ENCODE measurements at regions of chr19 and their contacts with region 1.

Region 1: GRCh38 chr19:6632002-6632621 is 37.8 kb downstream of the TNFSF14 start:
- DNase-seq: peak; percentile 89
- H3K4me3 Mint-ChIP-seq: no peak overlapping the region
- H3K27ac Mint-ChIP-seq: no peak overlapping the region
- H3K4me1 Mint-ChIP-seq: peaks cover 6% of the 10 kb centered on the region
- H3K27me3 Mint-ChIP-seq: no peaks in the 10 kb centered on the region
- CTCF ChIP-seq: peak; percentile 85

Region 2: DNA sequence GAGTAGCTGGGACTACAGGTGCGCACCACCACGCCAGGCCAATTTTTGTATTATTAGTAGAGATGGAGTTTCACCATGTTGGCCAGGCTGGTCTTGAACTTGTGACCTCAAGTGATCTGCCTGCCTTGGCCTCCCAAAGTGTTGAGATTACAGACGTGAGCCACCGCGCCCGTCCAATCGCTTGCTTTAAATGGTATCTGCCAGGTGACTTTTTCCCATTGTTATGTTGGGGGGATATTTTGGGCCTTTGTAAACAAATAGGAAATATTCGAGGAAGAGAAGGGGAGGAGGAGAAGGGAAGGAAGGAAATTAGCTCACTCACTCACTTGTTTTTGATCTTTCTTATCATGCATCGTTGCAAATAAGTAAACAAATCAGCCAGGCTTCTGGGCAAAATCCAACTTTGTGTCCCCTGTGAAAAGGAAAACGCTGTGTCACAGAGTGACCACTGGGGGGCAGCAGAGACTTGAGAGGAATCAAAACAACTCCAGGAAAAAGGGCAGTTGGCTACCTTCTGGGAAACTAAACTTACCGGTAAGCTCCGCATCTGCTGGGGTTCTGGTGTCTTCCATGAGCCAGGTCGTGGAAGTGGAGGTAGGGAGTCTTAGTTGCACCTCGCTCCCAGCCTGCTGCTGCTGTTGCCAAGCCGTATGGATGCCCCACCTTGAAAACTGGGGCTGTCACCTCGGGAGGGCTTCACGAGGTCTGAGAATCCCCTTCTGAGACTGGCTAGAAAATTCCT is 644.9 kb before region 1 on chr19:
- CTCF ChIA-PET with region 1: interaction called, 4 read pairs
- POLR2A ChIA-PET with region 1: no interaction called
- intact Hi-C with region 1: loop called (anchors 5 kb)
- DNase-seq: peak; percentile 84
- H3K4me3 Mint-ChIP-seq: peak overlapping the region; percentile 47
- H3K27ac Mint-ChIP-seq: no peak overlapping the region
- H3K4me1 Mint-ChIP-seq: peaks cover 14% of the 10 kb centered on the region
- H3K27me3 Mint-ChIP-seq: no peaks in the 10 kb centered on the region
- CTCF ChIP-seq: peak; percentile 89

Region 3: DNA sequence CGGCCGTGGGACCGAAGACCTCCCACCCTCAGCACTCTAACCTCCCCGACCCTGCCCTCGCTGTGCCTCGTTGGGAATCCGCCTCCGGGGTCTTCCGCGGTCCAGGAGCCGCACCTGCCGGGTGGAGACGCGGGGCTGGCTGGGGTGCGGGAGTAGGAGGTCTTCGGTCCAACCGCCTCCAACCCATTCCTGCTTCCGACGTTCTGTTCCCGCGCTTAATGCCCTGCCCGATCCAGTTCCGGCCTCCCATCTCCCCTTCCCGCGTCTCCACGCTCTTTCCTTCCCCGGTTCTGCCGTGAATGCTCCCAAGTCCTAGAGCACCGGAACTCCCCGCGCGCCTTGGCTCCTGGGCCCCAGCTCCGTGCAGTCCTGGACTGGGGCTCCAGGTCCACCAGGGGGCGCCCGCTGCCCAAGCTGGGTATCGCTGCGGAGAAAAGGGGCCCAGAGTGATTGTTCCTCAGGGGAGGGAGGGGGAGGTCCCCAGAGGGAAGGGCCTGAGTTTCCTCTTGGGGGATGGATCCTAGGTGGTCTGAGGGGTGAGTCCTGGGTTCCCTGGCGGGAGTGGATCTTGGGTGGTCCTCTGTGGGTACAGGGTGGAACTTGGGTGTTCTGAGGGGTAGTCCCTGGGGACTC is 115.3 kb before region 1 on chr19:
- CTCF ChIA-PET with region 1: interaction called, 80 read pairs
- POLR2A ChIA-PET with region 1: interaction called, 15 read pairs
- intact Hi-C with region 1: loop called (anchors 1 kb)
- DNase-seq: peak; percentile 93
- H3K4me3 Mint-ChIP-seq: peak overlapping the region; percentile 83
- H3K27ac Mint-ChIP-seq: peak overlapping the region; percentile 67
- H3K4me1 Mint-ChIP-seq: peaks cover 18% of the 10 kb centered on the region
- H3K27me3 Mint-ChIP-seq: no peaks in the 10 kb centered on the region
- CTCF ChIP-seq: peak; percentile 94

Region 4: GRCh38 chr19:6564393-6564792 is 67.7 kb before region 1 on chr19:
- CTCF ChIA-PET with region 1: interaction called, 25 read pairs
- POLR2A ChIA-PET with region 1: no interaction called
- intact Hi-C with region 1: loop called (anchors 1 kb)
- DNase-seq: peak; percentile 66
- H3K4me3 Mint-ChIP-seq: no peak overlapping the region
- H3K27ac Mint-ChIP-seq: no peak overlapping the region
- H3K4me1 Mint-ChIP-seq: no peaks in the 10 kb centered on the region
- H3K27me3 Mint-ChIP-seq: no peaks in the 10 kb centered on the region
- CTCF ChIP-seq: no peak

Region 5: GRCh38 chr19:6590827-6591319 is 41.2 kb before region 1 on chr19 and contains the start of gene CD70:
- CTCF ChIA-PET with region 1: interaction called, 3 read pairs
- POLR2A ChIA-PET with region 1: no interaction called
- intact Hi-C with region 1: loop called (anchors 2 kb)
- DNase-seq: peak; percentile 63
- H3K4me3 Mint-ChIP-seq: peak within 1 kb of the TSS; percentile 77
- H3K27ac Mint-ChIP-seq: peak within 1 kb of the TSS; percentile 18
- H3K4me1 Mint-ChIP-seq: peaks cover 39% of the 10 kb centered on the region
- H3K27me3 Mint-ChIP-seq: no peaks in the 10 kb centered on the region
- CTCF ChIP-seq: no peak
- total RNA-seq, gene CD70: 13.4 and 14.7 TPM in 2 replicates

Region 6: DNA sequence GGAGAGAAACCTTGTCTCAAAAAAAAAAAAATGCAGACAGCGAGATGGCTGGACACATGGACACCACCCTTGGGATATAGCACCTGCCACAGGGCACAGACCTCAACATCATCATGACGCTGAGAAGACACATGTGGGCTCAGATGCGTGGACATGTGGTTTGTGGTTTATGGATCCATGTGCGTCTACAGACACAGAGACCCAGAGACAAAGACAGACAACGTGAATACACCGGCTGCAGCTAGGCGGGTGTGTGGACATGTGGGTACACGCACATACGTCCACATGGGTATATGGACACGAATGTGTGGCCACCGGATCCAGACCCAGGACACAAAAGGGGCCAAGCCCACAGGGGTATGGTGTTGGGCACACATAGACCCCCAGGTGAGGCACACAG is 36.6 kb after region 1 on chr19:
- CTCF ChIA-PET with region 1: no interaction called
- POLR2A ChIA-PET with region 1: no interaction called
- intact Hi-C with region 1: no loop called
- DNase-seq: no peak
- H3K4me3 Mint-ChIP-seq: no peak overlapping the region
- H3K27ac Mint-ChIP-seq: no peak overlapping the region
- H3K4me1 Mint-ChIP-seq: peaks cover 6% of the 10 kb centered on the region
- H3K27me3 Mint-ChIP-seq: no peaks in the 10 kb centered on the region
- CTCF ChIP-seq: no peak

Region 7: GRCh38 chr19:6737284-6738046 is 105.4 kb after region 1 on chr19 and contains the start of gene GPR108:
- CTCF ChIA-PET with region 1: no interaction called
- POLR2A ChIA-PET with region 1: interaction called, 5 read pairs
- intact Hi-C with region 1: loop called (anchors 1 kb)
- DNase-seq: peak; percentile 100
- H3K4me3 Mint-ChIP-seq: peak within 1 kb of the TSS; percentile 88
- H3K27ac Mint-ChIP-seq: peak within 1 kb of the TSS; percentile 83
- H3K4me1 Mint-ChIP-seq: peaks cover 27% of the 10 kb centered on the region
- H3K27me3 Mint-ChIP-seq: no peaks in the 10 kb centered on the region
- CTCF ChIP-seq: no peak
- total RNA-seq, gene GPR108: 115 and 124 TPM in 2 replicates

Region 8: DNA sequence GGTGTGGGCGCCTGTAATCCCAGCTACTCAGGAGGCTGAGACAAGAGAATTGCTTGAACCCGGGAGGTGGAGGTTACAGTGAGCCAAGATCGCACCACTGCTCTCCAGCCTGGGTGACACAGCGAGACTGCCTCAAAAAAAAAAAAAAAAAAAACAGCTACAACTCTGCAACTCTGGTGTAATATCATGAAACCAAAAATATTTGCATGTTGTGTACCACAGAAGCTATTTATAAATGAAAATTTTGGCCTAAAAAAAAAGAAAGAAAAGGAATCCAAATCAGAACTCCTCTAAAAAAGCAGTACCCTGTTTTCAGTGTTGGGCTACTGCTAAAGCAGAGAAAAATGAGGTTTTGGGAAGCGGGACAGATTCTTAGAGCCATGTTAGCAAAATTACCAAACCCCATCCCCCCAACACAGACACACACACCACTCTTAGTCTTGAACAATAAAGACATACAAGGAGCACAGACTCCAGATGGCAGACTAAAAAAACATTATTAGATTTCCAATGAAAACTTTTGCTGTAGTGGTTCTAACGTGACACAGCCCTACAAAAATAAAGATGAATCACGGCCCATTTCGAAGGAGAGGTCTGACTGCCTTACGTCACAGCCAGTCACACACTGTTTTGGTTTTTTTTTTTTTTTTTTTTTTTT is 610.6 kb after region 1 on chr19:
- CTCF ChIA-PET with region 1: no interaction called
- POLR2A ChIA-PET with region 1: no interaction called
- intact Hi-C with region 1: no loop called
- DNase-seq: peak; percentile 76
- H3K4me3 Mint-ChIP-seq: no peak overlapping the region
- H3K27ac Mint-ChIP-seq: no peak overlapping the region
- H3K4me1 Mint-ChIP-seq: peaks cover 10% of the 10 kb centered on the region
- H3K27me3 Mint-ChIP-seq: no peaks in the 10 kb centered on the region
- CTCF ChIP-seq: no peak

Measured in MCF 10A (cell line).